ENCODE measurements at regions of chr17 and their contacts with region 1.

Region 1: DNA sequence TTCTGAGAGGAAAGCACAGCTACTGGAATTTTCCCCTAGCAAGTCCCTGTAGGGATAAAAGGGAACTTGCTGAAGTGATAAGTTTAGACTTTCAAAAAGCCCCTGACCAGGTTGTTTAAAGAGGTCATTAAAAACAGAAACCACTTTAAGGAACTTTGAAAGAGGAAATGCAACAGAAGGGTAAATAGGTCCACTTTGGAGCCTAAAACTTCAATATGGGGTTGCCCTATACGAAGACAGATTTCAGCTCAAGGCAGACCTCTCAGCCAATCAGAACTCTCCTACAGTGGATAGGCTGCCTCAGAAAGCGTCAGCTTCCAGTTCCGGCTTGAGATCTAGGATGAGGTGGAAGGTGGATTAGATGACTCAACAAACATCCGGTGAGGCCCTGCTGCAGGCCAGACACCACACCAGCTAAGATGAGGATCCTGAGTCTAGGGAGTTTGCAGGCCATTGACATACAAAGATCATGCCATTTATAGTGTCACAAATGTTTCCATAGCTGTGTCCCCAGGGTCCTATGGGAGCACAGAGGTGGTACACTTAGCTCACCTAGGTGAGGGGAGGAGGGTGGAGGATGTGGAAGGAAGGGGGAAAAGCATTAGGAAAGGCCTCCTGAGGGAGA is 7.9 kb upstream of the MFSD6L start:
- DNase-seq: peak in 1 of 2 experiments; percentile 16
- H3K4me3 ChIP-seq: no peak overlapping the region
- H3K27ac ChIP-seq: no peak overlapping the region
- H3K4me1 ChIP-seq: peaks cover 0 to 9% (median 4%) of the 10 kb centered on the region in 4 experiments; a peak in 2 of 7 replicates
- H3K27me3 ChIP-seq: no peaks in the 10 kb centered on the region; a peak in 1 of 7 replicates
- CTCF ChIP-seq: no peak
- EP300 ChIP-seq: no peak
- POLR2A ChIP-seq: no peak
- RAD21 ChIP-seq: no peak

Region 2: GRCh38 chr17:8785547-8786413 is 21.3 kb before region 1 on chr17:
- CTCF ChIA-PET with region 1: interaction called, 13 read pairs
- POLR2A ChIA-PET with region 1: no interaction called
- DNase-seq: peak; percentile 78 to 99
- H3K4me3 ChIP-seq: no peak overlapping the region
- H3K27ac ChIP-seq: no peak overlapping the region
- H3K4me1 ChIP-seq: peaks cover 0 to 5% (median 3%) of the 10 kb centered on the region in 4 experiments; a peak in 5 of 7 replicates
- H3K27me3 ChIP-seq: no peaks in the 10 kb centered on the region; a peak in 2 of 7 replicates
- CTCF ChIP-seq: peak; percentile 75 to 93 (median 86)
- EP300 ChIP-seq: no peak
- POLR2A ChIP-seq: no peak
- RAD21 ChIP-seq: peak; percentile 92 to 94

Region 3: GRCh38 chr17:8826808-8827435 is 19.9 kb after region 1 on chr17:
- CTCF ChIA-PET with region 1: interaction called, 15 read pairs
- POLR2A ChIA-PET with region 1: no interaction called
- DNase-seq: peak in 1 of 2 experiments; percentile 38
- H3K4me3 ChIP-seq: no peak overlapping the region
- H3K27ac ChIP-seq: no peak overlapping the region
- H3K4me1 ChIP-seq: peaks cover 0 to 7% (median 0%) of the 10 kb centered on the region in 4 experiments; a peak in 4 of 7 replicates
- H3K27me3 ChIP-seq: no peaks in the 10 kb centered on the region
- CTCF ChIP-seq: no peak
- EP300 ChIP-seq: no peak
- POLR2A ChIP-seq: no peak
- RAD21 ChIP-seq: no peak

Region 4: GRCh38 chr17:8832711-8833352 is 25.8 kb after region 1 on chr17:
- CTCF ChIA-PET with region 1: interaction called, 18 read pairs
- POLR2A ChIA-PET with region 1: no interaction called
- DNase-seq: peak; percentile 59 to 95
- H3K4me3 ChIP-seq: no peak overlapping the region
- H3K27ac ChIP-seq: no peak overlapping the region
- H3K4me1 ChIP-seq: peaks cover 0 to 5% (median 4%) of the 10 kb centered on the region in 4 experiments
- H3K27me3 ChIP-seq: no peaks in the 10 kb centered on the region
- CTCF ChIP-seq: peak; percentile 68 to 83 (median 69)
- EP300 ChIP-seq: no peak
- POLR2A ChIP-seq: no peak
- RAD21 ChIP-seq: peak; percentile 48 to 71